Breast epithelium (tissue), 4 donors: ENCODE measurements at regions of chr2 and their contacts with region 1.

Region 1: GRCh38 chr2:58449286-58450010 is 208.3 kb upstream of the FANCL start:
- DNase-seq: no peak
- H3K4me3 ChIP-seq: no peak overlapping the region
- H3K27ac ChIP-seq: no peak overlapping the region
- H3K4me1 ChIP-seq: no peaks in the 10 kb centered on the region
- H3K27me3 ChIP-seq: no peaks in the 10 kb centered on the region
- CTCF ChIP-seq: no peak
- POLR2A ChIP-seq: no peak

Region 2: DNA sequence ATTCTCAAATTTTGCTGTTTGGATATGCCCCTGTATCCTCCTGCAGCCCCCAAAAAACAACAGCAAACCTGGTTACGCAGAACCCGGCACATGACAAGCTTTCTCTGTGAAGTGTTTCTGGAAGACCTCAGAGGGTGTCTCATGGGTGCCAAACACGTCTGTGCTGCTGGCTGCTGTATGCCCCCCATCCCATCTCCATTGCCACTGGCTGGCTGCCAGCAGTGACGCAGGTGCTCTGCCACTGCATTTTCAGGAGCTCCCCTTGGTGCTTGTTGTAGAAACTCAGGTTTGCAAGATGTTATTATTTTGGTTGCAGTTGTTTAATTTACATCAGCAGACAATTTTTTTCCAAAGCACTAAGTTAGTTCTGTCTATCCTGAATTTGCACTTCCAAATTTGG is 42.0 kb before region 1 on chr2:
- intact Hi-C with region 1: no loop called
- DNase-seq: no peak
- H3K4me3 ChIP-seq: no peak overlapping the region
- H3K27ac ChIP-seq: no peak overlapping the region
- H3K4me1 ChIP-seq: no peaks in the 10 kb centered on the region
- H3K27me3 ChIP-seq: no peaks in the 10 kb centered on the region
- CTCF ChIP-seq: no peak
- POLR2A ChIP-seq: no peak

Region 3: GRCh38 chr2:58427572-58428095 is 21.8 kb before region 1 on chr2:
- intact Hi-C with region 1: no loop called
- DNase-seq: no peak
- H3K4me3 ChIP-seq: peak overlapping the region; percentile 22 to 71 (median 58)
- H3K27ac ChIP-seq: peak overlapping the region; percentile 26 to 82
- H3K4me1 ChIP-seq: no peaks in the 10 kb centered on the region
- H3K27me3 ChIP-seq: no peaks in the 10 kb centered on the region
- CTCF ChIP-seq: no peak
- POLR2A ChIP-seq: no peak

Region 4: GRCh38 chr2:58466804-58467203 is 17.4 kb after region 1 on chr2:
- intact Hi-C with region 1: no loop called
- DNase-seq: no peak
- H3K4me3 ChIP-seq: no peak overlapping the region
- H3K27ac ChIP-seq: no peak overlapping the region
- H3K4me1 ChIP-seq: no peaks in the 10 kb centered on the region
- H3K27me3 ChIP-seq: no peaks in the 10 kb centered on the region
- CTCF ChIP-seq: no peak
- POLR2A ChIP-seq: no peak

Region 5: GRCh38 chr2:59276033-59276432 is 826.6 kb after region 1 on chr2:
- intact Hi-C with region 1: loop called (anchors 5 kb)
- DNase-seq: no peak
- H3K4me3 ChIP-seq: no peak overlapping the region
- H3K27ac ChIP-seq: no peak overlapping the region
- H3K4me1 ChIP-seq: no peaks in the 10 kb centered on the region
- H3K27me3 ChIP-seq: no peaks in the 10 kb centered on the region
- CTCF ChIP-seq: no peak
- POLR2A ChIP-seq: no peak